Lower leg skin (tissue), 4 donors: ENCODE measurements at regions of chr10 and their contacts with region 1.

Region 1: DNA sequence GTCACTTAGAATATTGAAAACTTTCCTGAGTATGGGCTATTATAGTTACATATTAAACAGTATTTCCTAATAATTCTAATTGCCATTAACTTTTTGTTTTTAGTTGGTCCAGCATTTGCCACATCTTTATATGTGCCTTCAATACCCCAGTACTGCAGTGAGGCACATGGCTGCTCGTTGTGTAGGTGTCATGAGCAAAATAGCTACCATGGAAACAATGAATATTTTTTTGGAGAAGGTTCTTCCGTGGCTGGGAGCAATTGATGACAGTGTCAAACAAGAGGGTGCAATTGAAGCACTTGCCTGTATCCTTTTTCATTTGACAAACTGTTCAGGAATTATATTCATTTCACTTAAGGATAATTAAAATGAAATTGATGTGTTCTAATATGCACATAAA is 72.7 kb downstream of the BTAF1 start:
- DNase-seq: no peak
- H3K4me3 ChIP-seq: no peak overlapping the region
- CTCF ChIP-seq: no peak
- POLR2A ChIP-seq: no peak

Region 2: GRCh38 chr10:91980319-91980718 is 15.9 kb before region 1 on chr10:
- intact Hi-C with region 1: loop called (anchors 2 kb)
- DNase-seq: no peak
- H3K4me3 ChIP-seq: no peak overlapping the region
- CTCF ChIP-seq: no peak
- POLR2A ChIP-seq: no peak